GM12878 (cell line): ENCODE measurements at regions of chr9 and their contacts with region 1.

Region 1: GRCh38 chr9:19028835-19029451 is 4.1 kb downstream of the SAXO1 start:
- DNase-seq: no peak
- ATAC-seq: peak; percentile 87
- H3K4me3 ChIP-seq: no peak overlapping the region
- H3K27ac ChIP-seq: no peak overlapping the region
- H3K4me1 ChIP-seq: peaks cover 3% of the 10 kb centered on the region; the same call in 1 of the 2 replicates
- H3K27me3 ChIP-seq: no peaks in the 10 kb centered on the region
- CTCF ChIP-seq: peak; percentile 54 to 79 (median 71); a peak in 5 of 6 replicates
- EP300 ChIP-seq: no peak
- POLR2A ChIP-seq: no peak
- RAD21 ChIP-seq: peak; percentile 88

Region 2: DNA sequence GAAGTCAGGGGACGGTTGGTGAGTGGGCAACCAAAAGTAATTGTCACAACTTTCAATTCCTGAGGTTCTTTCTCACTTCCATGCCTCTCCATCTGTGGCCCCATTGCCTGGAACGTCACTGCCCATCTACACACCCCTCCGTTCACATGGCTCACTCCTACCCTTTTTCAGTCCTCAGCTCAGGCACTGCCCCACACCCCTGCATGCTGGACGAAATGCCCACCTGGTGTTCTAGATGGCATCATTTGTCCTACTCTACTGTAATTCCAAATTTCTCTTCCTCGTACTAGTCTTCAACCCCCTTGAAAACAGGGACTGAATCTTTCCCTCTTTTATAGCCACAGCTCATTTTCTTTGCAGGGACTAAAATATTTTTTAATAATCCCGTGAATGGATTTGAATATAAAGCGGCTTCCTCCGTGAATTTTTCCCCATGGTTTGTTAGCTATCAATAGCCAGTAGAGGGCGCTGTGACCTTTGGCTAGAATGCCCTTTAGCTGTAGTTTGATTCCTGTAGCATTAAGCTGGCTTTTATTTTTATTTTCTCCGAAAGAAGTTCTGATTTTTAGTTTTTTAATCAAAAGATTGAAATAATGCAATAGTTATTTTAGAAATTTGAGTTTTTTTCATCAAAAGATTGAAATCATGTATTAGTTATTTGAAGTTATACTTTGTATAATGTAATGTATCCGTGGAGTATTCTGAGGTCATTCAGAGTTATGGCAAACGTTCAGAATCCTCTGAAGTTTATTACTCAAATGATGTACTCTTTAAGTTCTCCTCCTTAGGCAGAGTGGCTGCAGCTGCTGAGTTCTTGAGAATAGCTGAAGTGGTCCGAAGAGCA is 1218.0 kb before region 1 on chr9:
- CTCF ChIA-PET with region 1: interaction called, 13 read pairs
- POLR2A ChIA-PET with region 1: no interaction called
- RAD21 ChIA-PET with region 1: no interaction called
- SMC1A ChIA-PET with region 1: interaction called, 3 read pairs
- in situ Hi-C with region 1: loop called (anchors 25 kb)
- intact Hi-C with region 1: no loop called
- DNase-seq: no peak
- ATAC-seq: peak; percentile 75
- H3K4me3 ChIP-seq: no peak overlapping the region
- H3K27ac ChIP-seq: no peak overlapping the region
- H3K4me1 ChIP-seq: no peaks in the 10 kb centered on the region
- H3K27me3 ChIP-seq: no peaks in the 10 kb centered on the region
- CTCF ChIP-seq: peak; percentile 75 to 77 (median 75)
- EP300 ChIP-seq: no peak
- POLR2A ChIP-seq: no peak
- RAD21 ChIP-seq: peak; percentile 96

Region 3: DNA sequence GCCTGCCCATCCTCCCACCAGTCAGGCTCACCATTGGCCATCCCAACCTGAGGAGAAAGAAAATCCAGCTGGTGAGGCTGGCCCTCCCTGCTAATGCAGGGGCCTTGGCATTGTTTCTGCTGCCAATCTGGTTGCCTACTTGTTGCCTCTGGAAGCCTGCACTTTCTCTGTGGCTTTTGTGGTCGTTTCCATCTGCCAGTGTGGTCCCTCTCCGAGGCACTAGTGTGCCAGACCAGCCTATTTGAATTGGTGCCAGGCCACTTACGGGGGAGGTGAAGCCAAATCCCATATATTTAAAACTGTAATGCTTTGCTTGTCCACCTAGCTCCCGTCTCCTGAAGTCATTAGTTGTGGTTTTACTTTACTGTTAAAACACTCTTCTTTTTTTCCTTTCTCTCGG is 768.4 kb before region 1 on chr9:
- CTCF ChIA-PET with region 1: interaction called, 70 read pairs
- POLR2A ChIA-PET with region 1: interaction called, 5 read pairs
- RAD21 ChIA-PET with region 1: interaction called, 38 read pairs
- SMC1A ChIA-PET with region 1: interaction called, 30 read pairs
- in situ Hi-C with region 1: loop called (anchors 5 kb)
- intact Hi-C with region 1: loop called (anchors 1 kb)
- DNase-seq: no peak
- ATAC-seq: no peak
- H3K4me3 ChIP-seq: no peak overlapping the region
- H3K27ac ChIP-seq: no peak overlapping the region
- H3K4me1 ChIP-seq: no peaks in the 10 kb centered on the region
- H3K27me3 ChIP-seq: no peaks in the 10 kb centered on the region; a peak in 1 of 4 replicates
- CTCF ChIP-seq: no peak
- EP300 ChIP-seq: no peak
- POLR2A ChIP-seq: no peak
- RAD21 ChIP-seq: no peak

Region 4: GRCh38 chr9:18791074-18791473 is 237.9 kb before region 1 on chr9:
- CTCF ChIA-PET with region 1: interaction called, 3 read pairs
- POLR2A ChIA-PET with region 1: no interaction called
- RAD21 ChIA-PET with region 1: interaction called, 4 read pairs
- SMC1A ChIA-PET with region 1: interaction called, 3 read pairs
- in situ Hi-C with region 1: no loop called
- intact Hi-C with region 1: loop called (anchors 10 kb)
- DNase-seq: no peak
- ATAC-seq: peak; percentile 85
- H3K4me3 ChIP-seq: no peak overlapping the region
- H3K27ac ChIP-seq: no peak overlapping the region
- H3K4me1 ChIP-seq: no peaks in the 10 kb centered on the region
- H3K27me3 ChIP-seq: no peaks in the 10 kb centered on the region
- CTCF ChIP-seq: peak; percentile 49 to 59 (median 55); a peak in 5 of 6 replicates
- EP300 ChIP-seq: no peak
- POLR2A ChIP-seq: no peak
- RAD21 ChIP-seq: peak; percentile 66; the same call in 1 of the 2 replicates

Region 5: GRCh38 chr9:18985464-18985951 is 43.4 kb before region 1 on chr9:
- CTCF ChIA-PET with region 1: interaction called, 23 read pairs
- POLR2A ChIA-PET with region 1: no interaction called
- RAD21 ChIA-PET with region 1: interaction called, 4 read pairs
- SMC1A ChIA-PET with region 1: interaction called, 3 read pairs
- in situ Hi-C with region 1: no loop called
- intact Hi-C with region 1: no loop called
- DNase-seq: no peak
- ATAC-seq: no peak
- H3K4me3 ChIP-seq: no peak overlapping the region
- H3K27ac ChIP-seq: no peak overlapping the region
- H3K4me1 ChIP-seq: no peaks in the 10 kb centered on the region
- H3K27me3 ChIP-seq: no peaks in the 10 kb centered on the region
- CTCF ChIP-seq: no peak
- EP300 ChIP-seq: no peak
- POLR2A ChIP-seq: no peak
- RAD21 ChIP-seq: no peak

Region 6: DNA sequence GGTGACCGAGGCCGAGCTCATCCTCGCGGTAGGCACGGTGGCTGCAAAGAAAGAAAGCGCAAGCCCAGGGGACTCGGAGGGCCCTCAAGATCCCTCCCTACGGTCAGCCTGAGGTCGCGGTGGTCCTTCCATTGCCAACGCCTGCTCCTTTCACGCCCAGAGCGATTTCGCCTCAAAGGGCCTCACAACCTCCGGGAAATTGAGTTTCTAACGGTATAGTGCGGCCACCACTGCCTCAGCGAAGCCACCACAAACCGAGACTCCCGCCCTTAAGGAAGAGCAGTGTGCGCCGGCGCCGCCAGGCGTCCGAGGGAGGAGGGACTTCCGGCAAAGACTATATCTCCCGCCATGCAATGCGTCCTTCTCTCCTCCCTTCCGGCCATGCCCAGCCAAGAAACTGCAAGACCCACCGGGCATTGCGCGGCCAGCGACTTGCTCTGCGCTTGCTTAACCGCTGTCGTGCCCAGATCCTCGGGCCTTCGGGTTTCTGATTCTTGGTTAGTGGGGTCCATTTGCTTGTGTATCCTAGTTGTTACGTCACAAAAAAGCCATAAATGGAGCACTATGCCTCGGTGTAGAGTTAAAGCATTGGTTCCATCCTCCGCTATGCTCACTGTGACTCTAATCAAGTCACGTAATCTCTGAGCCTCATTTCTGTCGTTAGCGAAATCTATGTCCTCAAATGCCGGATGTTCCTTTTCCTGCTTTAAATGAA is 73.8 kb after region 1 on chr9 and contains the start of gene HAUS6:
- CTCF ChIA-PET with region 1: no interaction called
- POLR2A ChIA-PET with region 1: no interaction called
- RAD21 ChIA-PET with region 1: no interaction called
- SMC1A ChIA-PET with region 1: no interaction called
- in situ Hi-C with region 1: no loop called
- intact Hi-C with region 1: no loop called
- DNase-seq: peak; percentile 89
- ATAC-seq: peak; percentile 98
- H3K4me3 ChIP-seq: peak within 1 kb of the TSS; percentile 80
- H3K27ac ChIP-seq: peak within 1 kb of the TSS; percentile 72
- H3K4me1 ChIP-seq: peaks cover 9% of the 10 kb centered on the region; the same call in 1 of the 2 replicates
- H3K27me3 ChIP-seq: no peaks in the 10 kb centered on the region
- CTCF ChIP-seq: peak in 2 of 3 experiments; percentile 10 to 44; a peak in 1 of 6 replicates
- EP300 ChIP-seq: no peak
- POLR2A ChIP-seq: peak; percentile 80
- RAD21 ChIP-seq: no peak
- polyA plus RNA-seq, gene HAUS6: 7.1 to 8.4 TPM

Region 7: DNA sequence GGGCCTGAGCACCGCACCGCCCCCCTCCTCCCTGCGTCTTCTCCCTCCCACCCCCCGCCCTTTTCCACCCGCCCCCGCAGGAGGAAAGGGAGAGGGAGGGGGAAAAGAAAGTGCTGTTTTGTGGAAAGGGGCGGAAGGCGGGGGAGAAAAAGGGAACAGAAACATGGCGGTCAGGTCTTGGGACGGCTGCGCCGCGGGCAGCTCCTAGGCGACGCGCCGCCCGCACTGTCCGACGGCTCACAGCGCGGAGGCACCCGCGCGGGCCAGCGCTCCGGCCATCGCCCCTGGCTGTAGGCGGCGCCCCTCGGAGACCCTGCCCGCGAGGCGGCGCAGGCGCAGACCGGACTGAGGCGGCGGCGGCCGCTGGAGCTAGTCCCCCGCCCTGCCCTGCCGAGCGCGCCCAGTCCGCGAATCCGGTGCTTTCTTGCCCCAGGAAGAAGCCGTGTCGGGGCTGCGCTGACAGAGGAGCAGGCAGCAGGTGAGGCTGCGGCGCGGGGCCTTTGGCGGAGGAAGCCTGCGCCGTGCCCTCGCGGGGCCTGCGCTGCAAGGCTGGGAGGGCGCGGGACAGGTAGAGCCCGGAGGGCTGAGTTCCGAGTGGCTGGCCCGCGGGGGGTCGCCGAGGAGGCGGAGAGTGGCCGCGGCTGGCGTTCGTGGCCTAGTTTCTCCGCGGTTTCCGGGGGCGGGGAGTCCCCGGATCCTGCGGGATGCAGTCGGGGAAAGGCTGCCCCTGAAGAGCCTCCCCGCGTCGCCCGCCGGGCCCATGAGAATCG is 201.6 kb after region 1 on chr9 and contains the start of gene DENND4C:
- CTCF ChIA-PET with region 1: no interaction called
- POLR2A ChIA-PET with region 1: no interaction called
- RAD21 ChIA-PET with region 1: no interaction called
- SMC1A ChIA-PET with region 1: no interaction called
- in situ Hi-C with region 1: no loop called
- intact Hi-C with region 1: no loop called
- DNase-seq: peak; percentile 66
- ATAC-seq: peak; percentile 90
- H3K4me3 ChIP-seq: peak within 1 kb of the TSS; percentile 79
- H3K27ac ChIP-seq: peak within 1 kb of the TSS; percentile 94
- H3K4me1 ChIP-seq: no peaks in the 10 kb centered on the region; the same call in 1 of the 2 replicates
- H3K27me3 ChIP-seq: no peaks in the 10 kb centered on the region
- CTCF ChIP-seq: peak in 1 of 3 experiments; percentile 24; a peak in 1 of 6 replicates
- EP300 ChIP-seq: peak; percentile 58 to 87
- POLR2A ChIP-seq: peak; percentile 92
- RAD21 ChIP-seq: no peak
- polyA plus RNA-seq, gene DENND4C: 8.2 to 10.1 TPM